H1 (cell line): ENCODE measurements at regions of chr12 and their contacts with region 1.

Region 1: GRCh38 chr12:106282457-106283097 is 20.0 kb upstream of the TCP11L2 start:
- DNase-seq: peak in 1 of 2 experiments; percentile 57
- H3K4me3 ChIP-seq: no peak overlapping the region
- H3K27ac ChIP-seq: no peak overlapping the region
- H3K4me1 ChIP-seq: no peaks in the 10 kb centered on the region
- H3K27me3 ChIP-seq: no peaks in the 10 kb centered on the region
- CTCF ChIP-seq: peak; percentile 59 to 84 (median 80)
- EP300 ChIP-seq: no peak
- POLR2A ChIP-seq: no peak
- RAD21 ChIP-seq: peak; percentile 91 to 92

Region 2: DNA sequence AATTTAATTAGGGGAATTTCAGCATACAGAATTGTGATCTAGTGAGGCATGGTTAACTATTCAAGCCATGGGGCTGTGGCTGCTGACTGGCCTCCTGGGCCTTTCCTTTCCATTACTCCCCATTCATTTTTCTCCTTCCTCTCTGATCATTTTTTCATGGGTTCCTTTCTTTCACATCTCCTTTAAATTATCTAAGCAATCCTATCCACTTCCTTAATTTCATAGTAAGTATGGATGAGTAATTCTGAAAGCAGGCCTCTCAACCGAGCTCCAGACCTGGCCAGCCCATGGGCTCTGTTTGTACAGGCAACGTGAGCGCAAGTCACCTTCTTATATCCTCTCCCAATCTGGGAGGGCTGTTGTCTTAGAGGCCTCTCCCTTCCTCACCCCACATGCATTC is 48.1 kb before region 1 on chr12:
- CTCF ChIA-PET with region 1: interaction called, 125 read pairs
- POLR2A ChIA-PET with region 1: interaction called, 4 read pairs
- DNase-seq: no peak
- H3K4me3 ChIP-seq: no peak overlapping the region
- H3K27ac ChIP-seq: no peak overlapping the region
- H3K4me1 ChIP-seq: peaks cover 0 to 5% (median under 1%) of the 10 kb centered on the region in 4 experiments; a peak in 1 of 7 replicates
- H3K27me3 ChIP-seq: no peaks in the 10 kb centered on the region
- CTCF ChIP-seq: no peak
- EP300 ChIP-seq: no peak
- POLR2A ChIP-seq: no peak
- RAD21 ChIP-seq: no peak

Region 3: DNA sequence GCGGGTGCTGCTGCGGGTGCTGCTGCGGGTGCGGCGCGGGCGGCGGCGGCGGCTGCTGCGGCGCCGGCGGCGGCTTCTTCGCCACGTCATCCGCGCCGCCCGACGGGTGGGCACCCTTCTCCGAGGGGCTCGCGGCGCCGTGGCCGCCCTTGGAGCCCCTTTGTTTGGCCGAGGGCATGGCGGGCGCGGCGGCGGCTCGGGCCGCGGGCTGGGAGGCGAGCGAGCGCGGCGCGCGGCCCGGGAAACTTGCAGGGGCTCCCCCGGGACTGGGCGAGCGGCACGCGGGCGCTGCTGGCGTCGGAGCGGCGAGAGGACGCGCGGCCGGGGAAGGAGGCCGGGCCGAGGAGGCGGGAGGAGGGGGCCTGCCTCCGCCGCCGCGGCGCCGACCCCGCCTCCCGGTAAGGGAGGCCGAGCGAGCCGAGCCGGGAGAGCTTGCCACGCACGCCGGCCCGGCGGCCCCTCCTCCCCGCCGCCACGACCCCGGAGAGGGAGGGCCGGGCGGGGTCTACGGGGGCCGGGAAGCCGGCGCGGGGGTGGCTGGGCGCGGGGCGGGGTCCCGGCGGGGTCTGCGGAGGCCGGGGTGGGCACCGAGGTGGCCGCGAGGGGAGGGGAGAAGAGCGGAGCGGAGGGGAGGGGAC is 34.8 kb before region 1 on chr12 and contains the start of gene CKAP4:
- CTCF ChIA-PET with region 1: interaction called, 17 read pairs
- POLR2A ChIA-PET with region 1: interaction called, 4 read pairs
- DNase-seq: peak in 1 of 2 experiments; percentile 78
- H3K4me3 ChIP-seq: peak within 1 kb of the TSS; percentile 42 to 84 (median 72)
- H3K27ac ChIP-seq: peak within 1 kb of the TSS; percentile 63; the same call in 1 of the 2 replicates
- H3K4me1 ChIP-seq: peaks cover 0 to 10% (median 3%) of the 10 kb centered on the region in 4 experiments; a peak in 4 of 7 replicates
- H3K27me3 ChIP-seq: no peaks in the 10 kb centered on the region
- CTCF ChIP-seq: no peak
- EP300 ChIP-seq: no peak
- POLR2A ChIP-seq: peak in 1 of 2 experiments; percentile 32; a peak in 1 of 3 replicates
- RAD21 ChIP-seq: no peak
- total RNA-seq, gene CKAP4: 79.0 and 80.7 TPM in 2 replicates

Region 4: DNA sequence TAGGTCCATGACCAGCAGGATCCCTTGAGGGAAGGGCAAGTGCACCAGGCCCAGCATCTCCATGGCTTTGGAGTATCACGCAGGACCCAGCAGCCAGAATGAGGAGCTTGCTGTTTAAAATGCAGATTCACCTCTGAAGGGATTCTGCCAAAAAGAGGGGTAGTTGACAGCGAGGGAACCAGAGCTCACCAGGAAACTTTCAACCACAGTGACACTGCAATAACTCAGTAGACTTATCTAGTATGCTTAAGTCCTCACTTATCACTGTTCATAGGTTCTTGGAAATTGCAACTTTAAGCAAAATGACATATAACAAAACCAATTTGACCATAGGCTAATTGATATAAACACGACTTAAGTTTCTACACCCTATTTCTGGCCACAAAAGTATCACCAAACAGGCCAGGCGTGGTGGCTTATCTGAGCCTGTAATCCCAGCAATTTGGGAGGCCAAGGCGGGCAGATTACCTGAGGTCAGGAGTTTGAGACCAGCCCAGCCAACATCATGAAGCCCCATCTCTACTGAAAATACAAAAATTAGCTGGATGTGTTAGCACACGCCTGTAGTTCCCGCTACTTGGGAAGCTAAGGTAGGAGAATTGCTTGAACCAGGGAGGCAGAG is 13.3 kb before region 1 on chr12:
- CTCF ChIA-PET with region 1: interaction called, 18 read pairs
- POLR2A ChIA-PET with region 1: no interaction called
- DNase-seq: no peak
- H3K4me3 ChIP-seq: no peak overlapping the region
- H3K27ac ChIP-seq: no peak overlapping the region
- H3K4me1 ChIP-seq: no peaks in the 10 kb centered on the region
- H3K27me3 ChIP-seq: no peaks in the 10 kb centered on the region
- CTCF ChIP-seq: no peak
- EP300 ChIP-seq: no peak
- POLR2A ChIP-seq: no peak
- RAD21 ChIP-seq: no peak

Region 5: DNA sequence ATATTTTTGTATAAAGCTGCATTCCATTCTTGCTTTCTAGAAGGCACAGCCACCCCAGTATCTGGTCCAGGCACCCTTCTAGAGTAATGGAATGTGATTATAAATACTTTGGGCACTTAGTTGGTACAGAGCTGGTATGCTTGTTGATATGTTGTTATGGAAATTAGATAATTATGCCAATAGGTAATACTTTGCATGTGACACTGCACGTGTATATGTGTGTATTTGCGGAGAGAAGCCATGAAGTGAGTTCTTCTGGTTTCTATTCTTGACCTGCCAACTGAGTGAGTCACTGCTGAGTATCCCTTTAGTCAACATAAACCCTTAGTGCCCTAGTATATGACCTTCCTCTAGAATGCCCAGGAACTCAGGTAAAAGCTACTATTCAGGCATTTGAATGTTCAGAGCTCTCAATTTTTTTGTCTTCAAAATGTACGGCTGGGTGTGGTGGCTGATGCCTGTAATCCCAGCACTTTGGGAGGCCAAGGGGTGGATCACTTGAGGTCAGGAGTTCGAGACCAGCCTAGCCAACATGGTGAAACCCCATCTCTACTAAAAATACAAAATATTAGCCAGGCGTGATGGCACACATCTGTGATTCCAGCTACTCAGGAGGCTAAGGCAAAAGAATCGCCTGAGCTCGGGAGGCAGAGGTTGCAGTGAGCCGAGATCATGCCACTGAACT is 13.8 kb after region 1 on chr12:
- CTCF ChIA-PET with region 1: interaction called, 28 read pairs
- POLR2A ChIA-PET with region 1: no interaction called
- DNase-seq: no peak
- H3K4me3 ChIP-seq: no peak overlapping the region
- H3K27ac ChIP-seq: no peak overlapping the region
- H3K4me1 ChIP-seq: peaks cover 0 to 4% (median under 1%) of the 10 kb centered on the region in 4 experiments; a peak in 3 of 7 replicates
- H3K27me3 ChIP-seq: no peaks in the 10 kb centered on the region
- CTCF ChIP-seq: no peak
- EP300 ChIP-seq: no peak
- POLR2A ChIP-seq: no peak
- RAD21 ChIP-seq: no peak

Region 6: DNA sequence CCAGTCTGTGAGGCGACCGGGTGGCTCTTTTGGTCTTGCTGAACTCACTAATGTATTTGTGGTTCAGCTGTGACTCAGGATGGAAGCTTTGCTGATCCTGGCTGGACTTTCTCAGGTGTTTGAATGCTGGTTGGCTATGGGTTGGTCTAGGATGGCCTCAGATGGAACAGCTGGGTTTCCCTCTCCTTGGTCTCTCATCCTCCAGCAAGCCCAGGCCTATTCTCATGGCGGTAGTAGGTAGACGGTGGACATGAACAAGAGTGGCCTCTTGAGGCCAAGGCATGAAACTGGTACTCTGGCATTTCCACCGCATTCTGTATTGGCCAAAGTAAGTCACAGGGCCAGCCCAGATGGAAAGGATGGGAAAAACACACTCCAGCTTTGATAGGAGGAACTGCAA is 63.2 kb after region 1 on chr12:
- CTCF ChIA-PET with region 1: interaction called, 10 read pairs
- POLR2A ChIA-PET with region 1: no interaction called
- DNase-seq: no peak
- H3K4me3 ChIP-seq: no peak overlapping the region
- H3K27ac ChIP-seq: no peak overlapping the region
- H3K4me1 ChIP-seq: no peaks in the 10 kb centered on the region
- H3K27me3 ChIP-seq: no peaks in the 10 kb centered on the region
- CTCF ChIP-seq: peak; percentile 57 to 79 (median 57)
- EP300 ChIP-seq: no peak
- POLR2A ChIP-seq: no peak
- RAD21 ChIP-seq: peak; percentile 73 to 77

Region 7: GRCh38 chr12:106455111-106455510 is 172.5 kb after region 1 on chr12:
- CTCF ChIA-PET with region 1: no interaction called
- POLR2A ChIA-PET with region 1: no interaction called
- DNase-seq: no peak
- H3K4me3 ChIP-seq: no peak overlapping the region
- H3K27ac ChIP-seq: no peak overlapping the region
- H3K4me1 ChIP-seq: peaks cover 0 to 9% (median 1%) of the 10 kb centered on the region in 4 experiments; a peak in 2 of 7 replicates
- H3K27me3 ChIP-seq: no peaks in the 10 kb centered on the region
- CTCF ChIP-seq: no peak
- EP300 ChIP-seq: no peak
- POLR2A ChIP-seq: no peak
- RAD21 ChIP-seq: no peak